ENCODE measurements at regions of chr1 and their contacts with region 1.

Region 1: DNA sequence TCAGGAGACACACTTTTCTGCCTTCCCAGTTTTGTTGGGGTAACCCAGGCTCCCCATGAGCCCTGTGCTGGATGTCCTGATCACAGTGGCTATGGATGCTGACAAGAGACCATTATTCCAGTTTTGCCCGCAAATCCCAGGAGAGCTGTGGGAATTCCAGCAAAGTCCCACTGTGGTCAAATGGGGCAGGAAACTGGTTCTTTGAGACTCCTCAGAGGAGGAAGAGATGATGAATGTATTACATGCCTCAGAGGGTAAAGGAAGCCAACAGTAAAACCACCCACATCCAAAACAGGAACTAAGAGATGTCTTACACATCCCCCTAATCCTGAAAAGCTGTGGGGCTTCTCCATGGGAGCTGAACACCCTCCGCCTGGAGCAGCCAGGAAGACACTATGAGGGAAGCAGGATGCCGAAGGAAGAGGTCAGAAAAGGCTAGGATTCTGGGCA is 12.8 kb upstream of the MPZL1 start:
- DNase-seq: no peak
- H3K4me3 ChIP-seq: no peak overlapping the region
- CTCF ChIP-seq: no peak

Region 2: DNA sequence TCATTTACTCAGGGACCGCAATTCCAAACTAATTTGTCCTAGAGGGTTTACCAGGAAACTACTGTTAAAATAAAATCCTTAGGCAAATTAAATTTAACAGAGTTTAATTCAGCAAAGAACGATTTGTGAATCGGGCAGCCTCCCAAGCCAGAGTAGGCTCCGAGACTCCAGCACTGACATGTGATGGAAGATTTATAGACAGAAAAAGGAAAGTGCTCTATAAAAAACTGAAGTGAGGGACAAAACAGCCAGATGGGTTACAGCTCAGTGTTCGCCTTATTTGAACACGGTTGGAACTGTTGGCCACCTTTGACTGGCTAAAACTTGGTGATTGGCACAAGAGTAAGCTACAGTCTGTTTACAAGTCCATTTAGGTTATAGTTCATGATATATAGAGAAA is 114.1 kb before region 1 on chr1:
- in situ Hi-C with region 1: no loop called
- DNase-seq: no peak
- H3K4me3 ChIP-seq: no peak overlapping the region
- CTCF ChIP-seq: no peak

Region 3: GRCh38 chr1:167605576-167605975 is 103.4 kb before region 1 on chr1:
- in situ Hi-C with region 1: loop called (anchors 5 kb)
- DNase-seq: no peak
- H3K4me3 ChIP-seq: no peak overlapping the region
- CTCF ChIP-seq: no peak

Region 4: GRCh38 chr1:167871331-167871730 is 162.4 kb after region 1 on chr1:
- in situ Hi-C with region 1: no loop called
- DNase-seq: no peak
- H3K4me3 ChIP-seq: no peak overlapping the region
- CTCF ChIP-seq: no peak

Region 5: GRCh38 chr1:167913863-167914502 is 205.0 kb after region 1 on chr1 and contains the start of gene ADCY10:
- in situ Hi-C with region 1: no loop called
- DNase-seq: no peak
- H3K4me3 ChIP-seq: no peak within 1 kb of the TSS
- CTCF ChIP-seq: no peak